Activated naive CD4-positive, alpha-beta T cell treated with anti-CD3 and anti-CD28 coated beads for 36 hours (primary cell): ENCODE measurements at regions of chrX and their contacts with region 1.

Region 1: GRCh38 chrX:1481636-1482529 is 29.2 kb upstream of the ASMTL start:
- DNase-seq: peak; percentile 84
- H3K4me3 Mint-ChIP-seq: peak overlapping the region; percentile 88
- H3K27ac Mint-ChIP-seq: peak overlapping the region; percentile 100
- H3K4me1 Mint-ChIP-seq: peaks cover 66% of the 10 kb centered on the region
- H3K27me3 Mint-ChIP-seq: no peaks in the 10 kb centered on the region

Region 2: DNA sequence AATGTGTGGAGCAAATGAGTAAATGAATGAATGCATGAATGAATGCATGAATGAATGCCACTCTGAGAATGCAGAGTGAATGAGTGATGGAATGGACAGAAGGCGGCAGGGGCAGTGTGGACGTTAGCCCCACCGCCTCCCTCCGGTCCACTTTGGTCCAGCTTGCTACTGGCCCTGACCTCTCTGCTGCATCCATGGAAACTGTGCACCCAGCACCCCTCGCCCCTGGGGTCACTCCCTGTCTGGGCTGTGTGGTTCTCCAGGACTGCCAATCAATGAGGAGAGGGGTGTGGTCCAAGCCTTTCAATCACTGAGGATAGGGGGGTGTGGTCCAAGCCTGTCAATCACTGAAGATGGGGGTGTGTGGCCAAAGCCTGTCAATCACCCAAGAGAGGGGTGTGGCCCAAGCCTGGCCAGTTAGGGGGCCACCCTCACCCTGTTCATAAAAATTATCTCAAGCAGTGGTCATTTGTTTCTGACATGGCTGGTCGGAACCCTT is 10.0 kb after region 1 on chrX:
- CTCF ChIA-PET with region 1: no interaction called
- intact Hi-C with region 1: loop called (anchors 1 kb)
- DNase-seq: peak; percentile 83
- H3K4me3 Mint-ChIP-seq: no peak overlapping the region
- H3K27ac Mint-ChIP-seq: no peak overlapping the region
- H3K4me1 Mint-ChIP-seq: peaks cover 27% of the 10 kb centered on the region
- H3K27me3 Mint-ChIP-seq: no peaks in the 10 kb centered on the region

Region 3: GRCh38 chrX:1521459-1521956 is 39.6 kb after region 1 on chrX:
- CTCF ChIA-PET with region 1: no interaction called
- intact Hi-C with region 1: loop called (anchors 5 kb)
- DNase-seq: peak; percentile 85
- H3K4me3 Mint-ChIP-seq: peak overlapping the region; percentile 74
- H3K27ac Mint-ChIP-seq: peak overlapping the region; percentile 75
- H3K4me1 Mint-ChIP-seq: peaks cover 51% of the 10 kb centered on the region
- H3K27me3 Mint-ChIP-seq: no peaks in the 10 kb centered on the region